ENCODE measurements at regions of chr17 and their contacts with region 1.

Region 1: GRCh38 chr17:45218895-45219661 is 2.6 kb upstream of the FMNL1 start:
- DNase-seq: peak; percentile 66 to 93
- H3K4me3 ChIP-seq: no peak overlapping the region
- H3K4me1 ChIP-seq: no peaks in the 10 kb centered on the region
- H3K27me3 ChIP-seq: peaks cover 35% of the 10 kb centered on the region

Region 2: DNA sequence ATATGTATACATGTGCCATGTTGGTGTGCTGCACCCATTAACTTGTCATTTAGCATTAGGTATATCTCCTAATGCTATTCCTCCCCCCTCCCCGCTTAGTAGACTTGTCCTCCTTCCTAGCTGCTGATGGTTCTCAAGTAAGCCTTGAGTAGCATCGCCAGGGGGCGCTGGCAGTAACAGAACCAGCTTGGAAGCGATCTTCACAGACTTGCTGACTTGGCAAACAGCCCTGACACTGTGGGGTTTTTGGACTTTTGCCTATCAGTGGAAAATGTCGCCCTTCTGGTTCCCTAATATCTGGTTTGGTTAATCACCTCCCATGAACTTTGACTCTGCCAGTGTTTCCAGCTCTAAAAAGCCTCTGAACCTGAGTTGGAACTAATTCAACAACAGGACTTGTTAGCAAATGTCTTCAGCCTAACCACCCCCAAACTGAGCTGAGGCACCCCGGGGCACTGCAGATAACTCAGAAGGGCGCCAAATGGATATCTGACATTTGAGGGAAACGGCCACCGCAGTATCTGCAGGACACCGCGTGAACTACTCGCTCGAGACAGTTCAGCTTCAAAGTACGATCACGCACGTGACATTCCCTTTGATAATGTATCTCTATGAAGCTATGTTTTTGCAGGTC is 58.3 kb after region 1 on chr17:
- in situ Hi-C with region 1: loop called (anchors 10 kb)
- DNase-seq: peak; percentile 69 to 92
- H3K4me3 ChIP-seq: no peak overlapping the region
- H3K4me1 ChIP-seq: no peaks in the 10 kb centered on the region
- H3K27me3 ChIP-seq: no peaks in the 10 kb centered on the region

Region 3: DNA sequence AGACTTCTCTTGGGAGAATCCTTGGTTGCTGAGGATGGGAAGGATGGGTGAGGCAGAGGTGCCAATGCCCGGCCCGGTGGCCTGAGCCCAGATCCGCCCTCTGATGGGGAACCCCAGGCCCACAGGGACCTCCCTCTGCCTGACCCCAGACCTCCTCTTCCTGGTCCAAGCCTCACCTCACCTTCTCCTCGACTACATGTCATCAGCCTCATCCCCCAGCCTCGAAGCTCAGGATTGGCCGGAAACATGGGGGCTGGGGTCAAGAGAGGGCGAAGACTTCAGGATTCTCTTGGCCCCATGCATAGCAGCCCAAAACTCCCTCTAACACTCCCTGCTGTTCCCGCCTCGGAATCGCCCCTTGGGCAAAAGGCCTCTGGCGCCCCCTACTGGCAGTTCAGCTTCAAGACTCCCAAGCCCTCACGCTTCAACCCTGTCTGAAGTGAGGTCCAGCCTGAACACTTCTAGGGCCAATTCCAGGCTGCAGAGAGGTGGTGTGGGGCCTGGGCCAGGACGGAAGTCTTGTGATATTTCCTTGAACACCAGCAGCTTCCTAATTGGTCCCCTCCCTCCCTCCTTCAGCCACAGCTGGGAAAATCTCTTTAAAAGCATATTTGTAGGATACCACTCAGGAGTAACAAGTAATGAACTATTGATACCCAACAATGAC is 166.4 kb after region 1 on chr17:
- in situ Hi-C with region 1: loop called (anchors 5 kb)
- DNase-seq: peak; percentile 67 to 93
- H3K4me3 ChIP-seq: no peak overlapping the region
- H3K4me1 ChIP-seq: no peaks in the 10 kb centered on the region
- H3K27me3 ChIP-seq: peaks cover 13% of the 10 kb centered on the region

Region 4: DNA sequence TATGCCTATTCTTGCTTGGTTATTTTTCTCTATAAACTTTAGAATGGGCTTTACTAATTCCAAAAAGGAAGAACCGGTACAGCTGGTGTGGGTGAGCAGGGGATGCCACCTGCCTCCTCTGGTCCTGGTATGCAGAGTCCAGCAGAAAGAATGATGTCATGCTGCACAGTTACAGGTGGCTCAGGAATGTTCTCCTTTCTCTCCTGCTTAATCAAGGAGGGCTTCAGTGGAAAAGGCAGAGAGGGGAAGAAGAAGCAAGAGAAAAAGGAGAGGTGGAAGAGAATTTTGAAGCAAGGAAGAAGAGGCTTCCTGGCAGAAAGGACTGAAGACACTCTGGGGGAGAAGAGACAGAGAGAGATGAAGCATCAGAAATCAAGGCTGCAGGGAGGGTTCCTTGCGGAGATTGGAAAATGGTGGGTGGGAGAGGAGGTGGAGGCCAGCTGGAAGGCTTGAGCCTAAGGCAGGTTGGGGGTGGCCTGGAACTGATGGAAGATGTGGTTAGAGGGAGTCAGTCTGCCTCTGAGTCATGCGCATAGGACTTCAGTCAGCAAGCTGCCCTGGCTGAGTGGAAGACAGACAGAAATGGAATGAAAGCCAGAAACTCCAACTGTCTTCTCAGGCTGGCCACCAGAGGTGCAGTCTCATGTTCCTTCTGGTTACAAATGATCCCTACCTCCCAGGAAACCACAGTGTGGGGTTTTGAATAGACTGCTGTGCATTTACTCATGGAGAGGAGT is 500.4 kb after region 1 on chr17:
- in situ Hi-C with region 1: no loop called
- DNase-seq: peak in 1 of 2 experiments; percentile 16
- H3K4me3 ChIP-seq: no peak overlapping the region
- H3K4me1 ChIP-seq: no peaks in the 10 kb centered on the region
- H3K27me3 ChIP-seq: peaks cover 17% of the 10 kb centered on the region